ENCODE measurements at regions of chr2 and their contacts with region 1.

Region 1: DNA sequence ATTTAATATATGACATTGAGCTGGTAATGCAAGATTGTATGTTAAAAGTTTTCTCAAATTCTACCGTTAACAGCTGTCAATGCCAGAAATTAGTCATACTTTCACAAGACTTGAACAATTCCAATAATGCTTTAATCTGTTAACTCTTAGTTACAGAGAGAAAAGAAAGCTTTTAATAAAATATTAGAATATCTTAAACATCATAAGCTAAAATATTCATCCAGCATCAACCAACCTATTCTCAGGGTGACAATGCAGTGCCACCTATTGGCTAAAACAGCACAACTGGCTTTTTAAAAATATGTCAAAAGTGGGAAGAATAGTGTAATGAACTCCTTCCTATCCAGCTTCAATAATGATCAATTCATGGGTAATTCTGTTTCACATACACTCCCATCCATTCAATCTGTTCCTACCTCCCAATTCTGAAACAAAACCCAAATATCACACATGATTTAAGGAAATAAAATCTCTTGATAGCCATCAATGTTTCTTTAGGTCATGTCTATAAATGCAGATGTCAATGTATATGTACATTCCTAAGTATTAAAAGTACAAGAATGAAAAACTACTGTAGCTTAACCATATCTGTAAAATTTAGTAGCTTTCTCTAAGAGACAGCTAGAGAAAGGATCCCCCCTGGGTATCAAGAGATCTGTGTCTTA is 79.8 kb upstream of the CCDC141 start:
- ATAC-seq: peak in 1 of 8 experiments; percentile 30
- H3K4me3 ChIP-seq: no peak overlapping the region
- H3K27ac ChIP-seq: no peak overlapping the region
- H3K4me1 ChIP-seq: no peaks in the 10 kb centered on the region

Region 2: DNA sequence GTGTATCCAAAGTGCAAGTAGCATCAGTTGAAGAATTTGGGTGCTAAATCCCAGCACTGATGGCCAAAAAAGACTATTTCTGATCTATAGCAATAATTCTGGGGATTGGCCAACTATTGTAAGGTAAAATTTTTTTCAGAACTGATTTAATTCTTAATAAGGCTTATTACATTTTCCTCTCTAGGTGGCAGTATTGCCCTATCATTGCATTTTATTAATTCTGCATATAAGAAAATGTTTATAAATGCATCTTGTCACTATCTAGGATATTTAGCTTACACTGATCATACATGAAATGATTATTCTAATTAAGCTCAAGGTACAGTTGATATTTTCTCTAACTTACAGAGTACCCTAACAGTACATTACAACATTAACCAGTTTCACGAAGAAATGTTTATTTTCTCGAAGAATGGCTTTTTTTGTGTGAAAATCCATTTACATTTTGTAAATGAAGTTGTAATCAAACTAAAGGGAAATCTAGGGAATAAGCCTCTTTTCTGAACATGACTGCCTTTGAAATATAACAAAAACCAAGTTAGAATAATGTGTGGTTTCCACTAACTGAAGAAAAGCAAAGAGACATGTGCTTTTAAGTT is 333.5 kb before region 1 on chr2:
- in situ Hi-C with region 1: loop called in 2 of 9 experiments (anchors 10 to 25 kb)
- ATAC-seq: no peak
- H3K4me3 ChIP-seq: no peak overlapping the region
- H3K27ac ChIP-seq: no peak overlapping the region
- H3K4me1 ChIP-seq: no peaks in the 10 kb centered on the region

Region 3: GRCh38 chr2:178891265-178891958 is 238.3 kb before region 1 on chr2:
- in situ Hi-C with region 1: loop called in 1 of 9 experiments (anchors 25 kb)
- ATAC-seq: peak; percentile 59 to 83 (median 69)
- H3K4me3 ChIP-seq: no peak overlapping the region
- H3K27ac ChIP-seq: no peak overlapping the region
- H3K4me1 ChIP-seq: peaks cover 21 to 24% of the 10 kb centered on the region in 2 donors

Region 4: DNA sequence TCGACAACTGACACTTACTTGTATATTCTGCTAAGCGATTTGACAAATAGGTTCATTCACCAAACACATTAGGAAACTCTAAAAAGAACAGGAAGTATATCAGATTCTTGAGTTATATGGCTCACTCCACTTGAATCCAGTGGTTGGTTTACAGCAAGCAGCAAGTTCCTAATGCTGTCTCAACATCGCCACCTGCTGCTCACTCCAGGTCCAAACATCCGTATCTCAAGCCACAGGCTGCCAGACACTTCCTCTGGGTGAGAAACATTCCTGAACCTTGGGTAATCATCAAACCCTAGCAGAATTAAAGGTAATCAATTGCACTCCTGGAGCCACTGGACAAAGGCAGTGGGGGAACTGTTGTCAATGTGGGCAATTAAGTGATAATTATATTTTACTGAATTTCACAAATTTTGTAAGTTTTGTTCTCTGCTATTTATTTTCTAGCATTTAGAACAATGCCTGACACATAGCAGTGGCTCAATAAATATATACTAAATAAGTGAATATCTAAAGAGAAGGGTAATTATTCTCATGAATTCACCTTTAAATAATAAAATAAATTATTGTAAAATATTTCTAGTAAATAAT is 215.4 kb before region 1 on chr2:
- in situ Hi-C with region 1: loop called in 1 of 9 experiments (anchors 25 kb)
- ATAC-seq: peak; percentile 45 to 94 (median 74)
- H3K4me3 ChIP-seq: no peak overlapping the region
- H3K27ac ChIP-seq: no peak overlapping the region
- H3K4me1 ChIP-seq: peaks cover 4 to 19% of the 10 kb centered on the region in 2 donors

Region 5: DNA sequence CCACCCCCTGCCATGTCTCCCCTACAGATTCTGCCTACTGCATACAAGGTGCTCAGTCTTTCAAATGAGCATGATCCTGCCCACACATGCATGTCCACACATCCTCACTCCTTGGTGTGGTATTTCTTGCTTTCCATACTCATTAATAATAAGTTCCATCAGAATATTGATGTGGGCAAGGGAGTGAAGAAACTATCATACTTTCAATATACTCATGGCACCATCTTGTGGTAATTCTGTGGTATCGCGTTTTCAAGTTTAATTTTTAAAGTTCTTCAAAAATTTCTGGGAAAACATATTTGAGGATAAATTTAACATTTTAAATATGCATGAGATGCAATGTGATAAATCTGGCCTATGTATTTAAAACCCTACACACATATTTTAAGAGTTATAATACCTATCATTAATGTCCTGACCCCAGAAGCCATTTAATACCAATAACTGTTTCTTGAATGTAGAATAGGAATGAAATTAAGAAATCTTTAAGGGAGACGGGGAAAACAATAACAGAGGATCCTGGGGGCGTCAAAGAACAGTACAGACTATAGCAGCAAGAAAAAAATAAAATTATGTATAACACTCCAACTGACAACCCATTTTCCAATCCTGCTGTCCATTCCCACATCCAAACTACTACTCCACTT is 621.6 kb after region 1 on chr2:
- in situ Hi-C with region 1: no loop called
- ATAC-seq: peak; percentile 39 to 67 (median 56)
- H3K4me3 ChIP-seq: no peak overlapping the region
- H3K27ac ChIP-seq: no peak overlapping the region
- H3K4me1 ChIP-seq: peaks cover 0 to 8% of the 10 kb centered on the region in 2 donors

Measured in motor neuron (in vitro differentiated cells).